ENCODE measurements at regions of chr14 and their contacts with region 1.

Region 1: DNA sequence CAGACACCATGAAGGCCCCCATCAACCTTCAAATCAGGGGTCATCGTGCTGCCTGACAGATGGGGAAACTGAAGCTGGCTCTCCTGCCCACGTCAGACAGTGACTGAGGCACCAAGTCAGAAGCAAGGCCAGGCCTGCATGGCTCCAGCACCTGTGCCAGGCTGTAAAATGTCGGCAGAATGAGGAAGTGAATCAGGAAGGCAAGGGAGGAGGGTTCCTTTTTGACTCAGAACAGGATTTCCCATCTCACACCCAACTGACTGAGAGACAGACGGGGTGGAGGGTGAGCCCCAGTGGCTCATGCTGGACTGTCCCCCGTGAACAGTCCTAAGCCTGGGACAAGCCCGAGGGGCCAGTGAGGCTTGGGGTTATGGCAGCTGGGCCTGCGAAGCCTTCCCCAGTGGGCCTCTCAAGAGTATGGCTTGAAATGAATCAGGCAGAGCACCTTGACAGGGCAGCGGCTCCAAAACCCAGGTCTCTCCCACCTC is 20.9 kb downstream of the SYNE3 start:
- DNase-seq: peak; percentile 91
- ATAC-seq: peak; percentile 92
- H3K4me3 ChIP-seq: peak overlapping the region in 3 of 5 experiments; percentile 14 to 53 (median 21)
- H3K4me3 Mint-ChIP-seq: peak overlapping the region; percentile 70
- H3K27ac ChIP-seq: peak overlapping the region; percentile 97
- H3K27ac Mint-ChIP-seq: peak overlapping the region; percentile 95
- H3K4me1 ChIP-seq: peaks cover 47 to 78% of the 10 kb centered on the region in 2 donors
- H3K4me1 Mint-ChIP-seq: peaks cover 81% of the 10 kb centered on the region
- H3K27me3 ChIP-seq: no peaks in the 10 kb centered on the region
- H3K27me3 Mint-ChIP-seq: no peaks in the 10 kb centered on the region
- CTCF ChIP-seq: no peak

Region 2: DNA sequence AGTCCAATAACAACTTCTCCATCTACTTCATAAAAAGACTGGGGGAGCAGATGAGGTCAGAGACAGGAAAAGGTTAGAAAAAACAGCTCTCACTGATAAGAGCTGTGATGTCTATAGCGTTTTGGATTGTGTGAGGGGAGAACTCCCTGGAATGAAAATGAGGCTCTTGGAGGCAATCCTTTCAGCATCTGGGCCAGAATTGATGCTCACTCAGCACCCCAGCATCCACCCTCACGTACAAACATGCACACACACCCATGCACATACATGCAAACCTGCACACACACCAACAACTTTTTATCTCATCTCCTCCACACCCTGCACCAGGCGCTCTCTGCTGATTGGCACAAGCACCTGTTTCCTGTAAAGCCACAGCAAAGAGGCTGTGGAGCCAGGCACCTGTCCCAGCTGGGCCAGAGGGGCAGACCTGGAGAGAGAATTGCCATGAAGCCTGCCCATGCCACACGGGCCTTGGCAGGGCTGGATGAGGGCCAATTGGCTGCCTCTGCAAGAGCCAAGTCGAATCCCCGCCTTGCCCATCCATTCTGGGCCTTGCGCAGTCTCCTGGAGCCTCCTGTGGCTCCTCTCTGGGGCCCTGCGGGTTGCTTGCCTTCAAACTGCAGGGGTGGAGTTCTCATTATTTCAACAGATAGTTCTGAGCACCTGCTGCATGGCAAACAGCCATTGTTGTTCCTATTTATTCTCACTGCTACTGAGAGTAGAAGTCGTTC is 32.2 kb before region 1 on chr14:
- CTCF ChIA-PET with region 1: interaction called, 3 read pairs
- POLR2A ChIA-PET with region 1: interaction called, 3 read pairs
- intact Hi-C with region 1: loop called (anchors 2 kb)
- DNase-seq: peak; percentile 68
- ATAC-seq: peak; percentile 58
- H3K4me3 ChIP-seq: peak overlapping the region in 1 of 5 experiments; percentile 19
- H3K4me3 Mint-ChIP-seq: peak overlapping the region; percentile 69
- H3K27ac ChIP-seq: peak overlapping the region; percentile 48 to 95
- H3K27ac Mint-ChIP-seq: peak overlapping the region; percentile 87
- H3K4me1 ChIP-seq: peaks cover 53 to 54% of the 10 kb centered on the region in 2 donors
- H3K4me1 Mint-ChIP-seq: peaks cover 44% of the 10 kb centered on the region
- H3K27me3 ChIP-seq: no peaks in the 10 kb centered on the region
- H3K27me3 Mint-ChIP-seq: no peaks in the 10 kb centered on the region
- CTCF ChIP-seq: no peak

Region 3: DNA sequence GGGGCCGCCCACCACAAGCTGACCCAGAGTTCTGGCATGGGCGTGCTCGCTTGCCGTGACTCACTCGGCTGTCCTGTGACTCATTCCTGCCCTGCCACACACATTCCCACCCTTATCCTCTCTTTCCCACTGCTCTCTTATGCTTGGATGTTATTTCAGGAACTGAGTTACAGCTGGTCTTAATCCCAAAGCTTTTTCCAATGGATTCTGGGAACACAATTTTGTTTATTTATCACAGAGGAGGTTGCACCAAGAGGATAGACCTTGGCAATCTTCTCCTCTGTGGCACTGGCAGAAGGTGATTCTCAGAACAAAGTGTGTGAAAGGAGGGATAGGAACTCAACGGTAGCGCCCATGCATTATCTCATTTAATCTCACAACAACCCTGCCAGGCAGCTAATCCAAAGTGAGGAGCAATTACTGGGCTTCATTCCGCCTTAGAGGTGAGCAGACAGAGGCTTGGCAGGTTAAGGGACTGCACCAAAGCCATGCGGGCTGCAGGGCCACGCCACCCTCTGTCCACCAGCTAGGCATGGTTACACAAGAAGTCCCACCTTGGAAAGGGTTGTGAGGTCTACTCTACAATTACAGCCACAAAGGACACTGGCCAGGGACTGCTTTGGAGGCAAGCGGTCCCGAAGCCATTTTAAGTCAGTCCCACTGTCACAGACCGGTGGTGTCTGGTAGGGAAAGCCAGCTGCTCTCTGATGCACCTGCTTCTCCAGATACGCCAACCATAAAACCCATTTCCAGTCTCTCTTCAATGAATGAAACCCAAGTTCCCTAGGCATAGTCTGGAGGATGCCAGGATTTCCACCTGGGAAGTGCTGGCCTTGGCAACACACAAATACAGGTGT is 12.0 kb before region 1 on chr14:
- CTCF ChIA-PET with region 1: interaction called, 6 read pairs
- POLR2A ChIA-PET with region 1: interaction called, 6 read pairs
- intact Hi-C with region 1: loop called (anchors 1 kb)
- DNase-seq: no peak
- ATAC-seq: no peak
- H3K4me3 ChIP-seq: no peak overlapping the region
- H3K4me3 Mint-ChIP-seq: no peak overlapping the region
- H3K27ac ChIP-seq: no peak overlapping the region
- H3K27ac Mint-ChIP-seq: peak overlapping the region; percentile 59
- H3K4me1 ChIP-seq: peaks cover 64 to 87% of the 10 kb centered on the region in 2 donors
- H3K4me1 Mint-ChIP-seq: peaks cover 80% of the 10 kb centered on the region
- H3K27me3 ChIP-seq: no peaks in the 10 kb centered on the region
- H3K27me3 Mint-ChIP-seq: no peaks in the 10 kb centered on the region
- CTCF ChIP-seq: no peak

Region 4: GRCh38 chr14:95545179-95546168 is 49.9 kb after region 1 on chr14:
- CTCF ChIA-PET with region 1: no interaction called
- POLR2A ChIA-PET with region 1: no interaction called
- intact Hi-C with region 1: no loop called
- DNase-seq: no peak
- ATAC-seq: no peak
- H3K4me3 ChIP-seq: no peak overlapping the region
- H3K4me3 Mint-ChIP-seq: no peak overlapping the region
- H3K27ac ChIP-seq: no peak overlapping the region
- H3K27ac Mint-ChIP-seq: no peak overlapping the region
- H3K4me1 ChIP-seq: no peaks in the 10 kb centered on the region
- H3K4me1 Mint-ChIP-seq: peaks cover 2% of the 10 kb centered on the region
- H3K27me3 ChIP-seq: no peaks in the 10 kb centered on the region
- H3K27me3 Mint-ChIP-seq: no peaks in the 10 kb centered on the region
- CTCF ChIP-seq: no peak

Region 5: GRCh38 chr14:95601650-95602049 is 106.1 kb after region 1 on chr14:
- CTCF ChIA-PET with region 1: no interaction called
- POLR2A ChIA-PET with region 1: no interaction called
- intact Hi-C with region 1: no loop called
- DNase-seq: no peak
- ATAC-seq: no peak
- H3K4me3 ChIP-seq: no peak overlapping the region
- H3K4me3 Mint-ChIP-seq: no peak overlapping the region
- H3K27ac ChIP-seq: no peak overlapping the region
- H3K27ac Mint-ChIP-seq: no peak overlapping the region
- H3K4me1 ChIP-seq: peaks cover 4 to 5% of the 10 kb centered on the region in 2 donors
- H3K4me1 Mint-ChIP-seq: peaks cover 6% of the 10 kb centered on the region
- H3K27me3 ChIP-seq: peaks cover 0 to 57% (median 21%) of the 10 kb centered on the region in 4 experiments
- H3K27me3 Mint-ChIP-seq: peaks cover 54% of the 10 kb centered on the region
- CTCF ChIP-seq: no peak

Region 6: DNA sequence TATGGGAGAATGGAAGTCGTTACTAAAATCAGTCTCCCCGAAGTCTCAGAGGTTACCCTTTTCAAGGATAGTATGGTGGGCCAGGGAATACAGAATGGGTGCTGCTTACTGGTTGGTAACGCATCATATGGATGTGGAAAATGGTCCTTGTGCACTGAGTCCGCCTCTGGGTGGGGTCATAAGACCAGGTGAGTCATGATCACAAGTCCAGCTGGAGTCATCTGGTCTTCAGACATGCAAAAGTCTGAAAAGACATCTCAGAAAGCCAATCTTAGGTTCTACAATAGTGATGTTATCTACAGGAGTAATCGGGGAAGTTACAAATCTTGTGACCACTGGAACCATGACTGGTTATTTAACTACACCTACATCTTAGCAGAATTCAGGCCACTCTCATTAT is 118.8 kb after region 1 on chr14:
- CTCF ChIA-PET with region 1: no interaction called
- POLR2A ChIA-PET with region 1: no interaction called
- intact Hi-C with region 1: no loop called
- DNase-seq: peak; percentile 36
- ATAC-seq: peak; percentile 33
- H3K4me3 ChIP-seq: no peak overlapping the region
- H3K4me3 Mint-ChIP-seq: no peak overlapping the region
- H3K27ac ChIP-seq: no peak overlapping the region
- H3K27ac Mint-ChIP-seq: peak overlapping the region; percentile 23
- H3K4me1 ChIP-seq: peaks cover 13 to 28% of the 10 kb centered on the region in 2 donors
- H3K4me1 Mint-ChIP-seq: peaks cover 32% of the 10 kb centered on the region
- H3K27me3 ChIP-seq: no peaks in the 10 kb centered on the region
- H3K27me3 Mint-ChIP-seq: peaks cover 26% of the 10 kb centered on the region
- CTCF ChIP-seq: no peak

Region 7: DNA sequence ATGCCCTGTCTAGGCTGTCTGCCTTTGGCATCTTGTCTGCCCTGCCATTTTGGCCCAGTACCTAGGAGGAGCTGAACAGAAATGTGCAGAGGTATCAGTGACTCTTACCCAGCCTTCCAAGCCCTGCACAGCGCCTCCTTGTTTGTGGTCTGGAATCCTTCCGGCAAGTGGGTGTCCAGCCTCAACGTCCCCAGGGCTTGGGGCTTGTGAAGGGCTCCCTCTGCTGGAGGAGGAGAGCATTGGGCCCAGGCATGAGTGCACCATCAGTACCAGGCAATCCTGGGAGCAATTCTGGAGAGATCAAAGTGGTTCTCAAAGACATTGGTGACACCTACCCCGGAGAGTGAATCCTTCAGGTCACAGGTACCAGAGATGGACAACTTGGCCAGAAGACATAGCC is 188.2 kb after region 1 on chr14:
- CTCF ChIA-PET with region 1: no interaction called
- POLR2A ChIA-PET with region 1: no interaction called
- intact Hi-C with region 1: no loop called
- DNase-seq: peak; percentile 53
- ATAC-seq: peak; percentile 56
- H3K4me3 ChIP-seq: no peak overlapping the region
- H3K4me3 Mint-ChIP-seq: no peak overlapping the region
- H3K27ac ChIP-seq: no peak overlapping the region
- H3K27ac Mint-ChIP-seq: no peak overlapping the region
- H3K4me1 ChIP-seq: peaks cover 61 to 68% of the 10 kb centered on the region in 2 donors
- H3K4me1 Mint-ChIP-seq: peaks cover 62% of the 10 kb centered on the region
- H3K27me3 ChIP-seq: no peaks in the 10 kb centered on the region
- H3K27me3 Mint-ChIP-seq: peaks cover 24% of the 10 kb centered on the region
- CTCF ChIP-seq: peak; percentile 57

Measured in B cell (primary cell).